Naive thymus-derived CD4-positive, alpha-beta T cell (primary cell): ENCODE measurements at regions of chr4 and their contacts with region 1.

Region 1: GRCh38 chr4:26459054-26459755 is 31.1 kb downstream of the CCKAR start:
- DNase-seq: peak in 7 of 9 donors; percentile 15 to 62 (median 51)
- ATAC-seq: peak; percentile 62
- H3K4me3 ChIP-seq: no peak overlapping the region
- H3K4me3 Mint-ChIP-seq: peak overlapping the region in 9 of 10 donors; percentile 21 to 82 (median 61)
- H3K27ac ChIP-seq: no peak overlapping the region
- H3K27ac Mint-ChIP-seq: peak overlapping the region in 5 of 9 donors; percentile 5 to 68 (median 60)
- H3K4me1 ChIP-seq: peaks cover 0 to 16% of the 10 kb centered on the region in 2 donors
- H3K4me1 Mint-ChIP-seq: peaks cover 0 to 30% (median 20%) of the 10 kb centered on the region in 7 donors
- H3K27me3 ChIP-seq: no peaks in the 10 kb centered on the region
- H3K27me3 Mint-ChIP-seq: no peaks in the 10 kb centered on the region

Region 2: GRCh38 chr4:27024805-27025204 is 565.6 kb after region 1 on chr4:
- CTCF ChIA-PET with region 1: no interaction called
- POLR2A ChIA-PET with region 1: no interaction called
- intact Hi-C with region 1: loop called in 1 of 2 experiments (anchors 5 kb)
- DNase-seq: no peak
- ATAC-seq: no peak
- H3K4me3 ChIP-seq: no peak overlapping the region
- H3K4me3 Mint-ChIP-seq: no peak overlapping the region
- H3K27ac ChIP-seq: no peak overlapping the region
- H3K27ac Mint-ChIP-seq: peak overlapping the region in 3 of 9 donors; percentile 3 to 27 (median 10)
- H3K4me1 ChIP-seq: no peaks in the 10 kb centered on the region
- H3K4me1 Mint-ChIP-seq: peaks cover 0 to 7% (median 4%) of the 10 kb centered on the region in 7 donors
- H3K27me3 ChIP-seq: no peaks in the 10 kb centered on the region
- H3K27me3 Mint-ChIP-seq: no peaks in the 10 kb centered on the region